CD8-positive, alpha-beta memory T cell (primary cell): ENCODE measurements at regions of chr3 and their contacts with region 1.

Region 1: GRCh38 chr3:183385698-183386613 is 42.5 kb downstream of the MCF2L2 start:
- DNase-seq: peak in 4 of 5 donors; percentile 31 to 58 (median 46)
- H3K4me3 ChIP-seq: no peak overlapping the region
- H3K4me3 Mint-ChIP-seq: no peak overlapping the region
- H3K27ac ChIP-seq: no peak overlapping the region
- H3K27ac Mint-ChIP-seq: peak overlapping the region in 2 of 8 donors; percentile 56 to 76
- H3K4me1 ChIP-seq: no peaks in the 10 kb centered on the region
- H3K4me1 Mint-ChIP-seq: peaks cover 0 to 4% (median 3%) of the 10 kb centered on the region in 3 donors
- H3K27me3 ChIP-seq: no peaks in the 10 kb centered on the region
- H3K27me3 Mint-ChIP-seq: no peaks in the 10 kb centered on the region

Region 2: GRCh38 chr3:183122257-183122932 is 263.6 kb before region 1 on chr3:
- CTCF ChIA-PET with region 1: interaction called, 85 read pairs
- POLR2A ChIA-PET with region 1: no interaction called
- DNase-seq: peak in 2 of 5 donors; percentile 32 to 49
- H3K4me3 ChIP-seq: no peak overlapping the region
- H3K4me3 Mint-ChIP-seq: no peak overlapping the region
- H3K27ac ChIP-seq: no peak overlapping the region
- H3K27ac Mint-ChIP-seq: no peak overlapping the region
- H3K4me1 ChIP-seq: no peaks in the 10 kb centered on the region
- H3K4me1 Mint-ChIP-seq: peaks cover 0 to 4% (median 4%) of the 10 kb centered on the region in 3 donors
- H3K27me3 ChIP-seq: no peaks in the 10 kb centered on the region
- H3K27me3 Mint-ChIP-seq: peaks cover 4% of the 10 kb centered on the region in 2 donors

Region 3: GRCh38 chr3:183455089-183455488 is 69.1 kb after region 1 on chr3:
- CTCF ChIA-PET with region 1: no interaction called
- POLR2A ChIA-PET with region 1: no interaction called
- DNase-seq: no peak
- H3K4me3 ChIP-seq: no peak overlapping the region
- H3K4me3 Mint-ChIP-seq: no peak overlapping the region
- H3K27ac ChIP-seq: no peak overlapping the region
- H3K27ac Mint-ChIP-seq: no peak overlapping the region
- H3K4me1 ChIP-seq: no peaks in the 10 kb centered on the region
- H3K4me1 Mint-ChIP-seq: peaks cover 0 to under 1% (median 0%) of the 10 kb centered on the region in 3 donors
- H3K27me3 ChIP-seq: no peaks in the 10 kb centered on the region
- H3K27me3 Mint-ChIP-seq: no peaks in the 10 kb centered on the region